Ovary (tissue), 10 donors: ENCODE measurements at regions of chr11 and their contacts with region 1.

Region 1: DNA sequence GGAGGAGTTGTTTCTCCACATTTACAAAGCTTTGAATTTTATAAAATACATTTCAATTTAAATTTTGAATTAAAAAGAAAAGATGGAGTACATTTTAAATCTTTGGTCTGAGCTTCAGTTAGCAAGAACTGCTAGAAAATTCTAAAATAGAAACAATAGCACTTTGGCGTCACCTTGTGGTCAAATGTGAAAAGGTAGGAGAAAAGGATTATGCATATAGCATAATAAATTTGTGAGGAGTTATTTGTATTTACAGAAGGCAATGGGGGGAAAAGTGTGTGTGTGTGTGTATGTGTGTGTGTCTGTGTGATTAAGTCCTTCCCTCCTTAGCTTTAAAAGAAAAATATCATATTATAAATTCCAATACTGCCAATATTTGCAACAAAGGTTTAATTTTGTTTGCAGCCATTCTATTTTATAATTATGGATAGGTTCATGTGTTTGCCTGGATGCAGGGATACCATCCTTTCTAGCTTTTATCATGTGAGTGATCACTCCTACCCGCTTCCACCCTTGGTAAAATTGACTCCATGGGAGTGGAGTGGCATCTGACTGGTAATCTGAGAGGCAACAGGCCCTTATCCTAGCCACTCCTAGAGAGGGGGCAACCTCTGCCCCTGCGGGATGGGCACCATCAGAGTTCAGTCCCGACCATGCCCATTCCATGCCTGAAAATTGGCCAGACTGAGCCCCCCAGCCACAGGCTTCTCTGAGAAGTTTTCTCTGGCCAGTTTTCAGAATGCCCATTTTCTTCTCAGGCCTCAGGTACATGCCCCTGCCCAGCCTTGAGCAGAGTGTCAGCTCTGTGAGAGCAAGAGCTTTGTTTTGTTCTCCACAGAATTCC is 13.6 kb upstream of the LGR4 start:
- DNase-seq: peak in 1 of 5 donors; percentile 48
- H3K4me3 ChIP-seq: no peak overlapping the region
- H3K27ac ChIP-seq: no peak overlapping the region
- H3K4me1 ChIP-seq: no peaks in the 10 kb centered on the region
- H3K27me3 ChIP-seq: no peaks in the 10 kb centered on the region
- CTCF ChIP-seq: peak; percentile 78 to 94 (median 86)
- EP300 ChIP-seq: no peak
- POLR2A ChIP-seq: no peak

Region 2: DNA sequence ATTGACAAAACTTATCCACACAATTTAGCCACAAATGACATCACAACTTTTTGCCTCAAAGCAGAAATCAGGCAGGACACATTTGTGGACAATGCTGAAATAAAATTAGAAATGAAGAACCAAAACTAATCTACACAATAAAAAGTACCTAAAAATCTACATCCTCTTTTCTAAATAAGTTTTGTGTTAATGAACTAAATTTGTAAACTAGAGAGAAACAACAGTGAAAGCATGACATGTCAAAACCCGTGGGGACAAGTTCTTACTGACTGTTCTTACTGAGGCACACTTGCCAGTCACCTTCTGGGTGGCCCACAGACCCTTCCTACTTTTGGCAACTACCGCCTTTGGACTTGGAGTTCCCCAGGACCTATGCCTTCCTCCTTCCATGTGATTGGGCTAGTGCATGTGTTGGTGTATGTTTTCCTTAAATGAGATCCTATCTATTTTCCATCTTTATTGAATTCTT is 853.4 kb before region 1 on chr11:
- intact Hi-C with region 1: no loop called
- DNase-seq: no peak
- H3K4me3 ChIP-seq: no peak overlapping the region
- H3K27ac ChIP-seq: no peak overlapping the region
- H3K4me1 ChIP-seq: no peaks in the 10 kb centered on the region
- H3K27me3 ChIP-seq: no peaks in the 10 kb centered on the region
- CTCF ChIP-seq: no peak
- EP300 ChIP-seq: no peak
- POLR2A ChIP-seq: no peak

Region 3: GRCh38 chr11:27194976-27195375 is 291.2 kb before region 1 on chr11:
- intact Hi-C with region 1: loop called in 1 of 4 experiments (anchors 5 kb)
- DNase-seq: no peak
- H3K4me3 ChIP-seq: no peak overlapping the region
- H3K27ac ChIP-seq: no peak overlapping the region
- H3K4me1 ChIP-seq: peaks cover 4% of the 10 kb centered on the region
- H3K27me3 ChIP-seq: no peaks in the 10 kb centered on the region
- CTCF ChIP-seq: no peak
- EP300 ChIP-seq: no peak
- POLR2A ChIP-seq: no peak

Region 4: GRCh38 chr11:27524155-27524554 is 38.0 kb after region 1 on chr11:
- intact Hi-C with region 1: no loop called
- DNase-seq: no peak
- H3K4me3 ChIP-seq: no peak overlapping the region
- H3K27ac ChIP-seq: no peak overlapping the region
- H3K4me1 ChIP-seq: no peaks in the 10 kb centered on the region
- H3K27me3 ChIP-seq: no peaks in the 10 kb centered on the region
- CTCF ChIP-seq: no peak
- EP300 ChIP-seq: no peak
- POLR2A ChIP-seq: no peak